Activated CD4-positive, alpha-beta memory T cell treated with anti-CD3 and anti-CD28 coated beads for 36 hours (primary cell): ENCODE measurements at regions of chr1 and their contacts with region 1.

Region 1: DNA sequence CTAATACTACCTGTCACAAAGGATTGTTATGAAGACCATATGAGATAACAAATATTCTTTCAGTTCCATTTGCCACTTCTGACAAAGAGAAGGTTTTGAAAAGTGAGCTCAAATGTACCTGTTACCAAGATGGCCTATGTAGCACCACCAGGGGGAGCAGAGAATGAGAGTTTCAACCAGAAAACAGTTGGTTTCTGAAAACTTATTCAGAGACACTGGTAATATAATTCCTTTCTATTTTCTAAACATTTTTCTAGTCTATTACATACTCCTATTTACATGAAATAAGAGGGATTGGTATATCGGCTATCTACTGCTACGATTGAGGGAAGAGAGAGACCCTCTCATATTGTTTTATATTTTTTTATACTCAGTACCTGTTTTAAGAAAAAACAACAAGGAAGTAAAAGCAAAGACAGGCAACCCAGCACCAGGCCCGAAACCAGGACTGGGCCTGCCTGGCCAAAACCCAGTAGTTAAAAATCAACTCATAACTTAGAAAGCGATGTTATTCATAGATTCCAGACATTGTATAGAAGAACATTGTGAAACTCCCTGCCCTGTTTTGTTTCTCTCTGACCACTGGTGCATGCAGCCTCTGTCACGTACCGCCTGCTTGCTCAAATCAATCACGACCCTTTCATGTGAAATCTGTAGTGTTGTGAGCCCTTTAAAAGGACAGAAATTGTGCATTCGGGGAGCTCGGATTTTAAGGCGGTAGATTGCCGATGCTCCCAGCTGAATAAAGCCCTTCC is 48.3 kb downstream of the IL23R start:
- DNase-seq: peak; percentile 62
- H3K4me3 Mint-ChIP-seq: no peak overlapping the region
- H3K27ac Mint-ChIP-seq: no peak overlapping the region
- H3K4me1 Mint-ChIP-seq: peaks cover 46% of the 10 kb centered on the region
- H3K27me3 Mint-ChIP-seq: no peaks in the 10 kb centered on the region

Region 2: GRCh38 chr1:66996018-66996682 is 218.4 kb before region 1 on chr1:
- CTCF ChIA-PET with region 1: interaction called, 47 read pairs
- POLR2A ChIA-PET with region 1: no interaction called
- intact Hi-C with region 1: loop called (anchors 1 kb)
- DNase-seq: peak; percentile 78
- H3K4me3 Mint-ChIP-seq: no peak overlapping the region
- H3K27ac Mint-ChIP-seq: peak overlapping the region; percentile 25
- H3K4me1 Mint-ChIP-seq: peaks cover 16% of the 10 kb centered on the region
- H3K27me3 Mint-ChIP-seq: no peaks in the 10 kb centered on the region

Region 3: GRCh38 chr1:67077593-67077992 is 137.0 kb before region 1 on chr1:
- CTCF ChIA-PET with region 1: no interaction called
- POLR2A ChIA-PET with region 1: no interaction called
- intact Hi-C with region 1: no loop called
- DNase-seq: no peak
- H3K4me3 Mint-ChIP-seq: no peak overlapping the region
- H3K27ac Mint-ChIP-seq: no peak overlapping the region
- H3K4me1 Mint-ChIP-seq: no peaks in the 10 kb centered on the region
- H3K27me3 Mint-ChIP-seq: peaks cover 3% of the 10 kb centered on the region

Region 4: DNA sequence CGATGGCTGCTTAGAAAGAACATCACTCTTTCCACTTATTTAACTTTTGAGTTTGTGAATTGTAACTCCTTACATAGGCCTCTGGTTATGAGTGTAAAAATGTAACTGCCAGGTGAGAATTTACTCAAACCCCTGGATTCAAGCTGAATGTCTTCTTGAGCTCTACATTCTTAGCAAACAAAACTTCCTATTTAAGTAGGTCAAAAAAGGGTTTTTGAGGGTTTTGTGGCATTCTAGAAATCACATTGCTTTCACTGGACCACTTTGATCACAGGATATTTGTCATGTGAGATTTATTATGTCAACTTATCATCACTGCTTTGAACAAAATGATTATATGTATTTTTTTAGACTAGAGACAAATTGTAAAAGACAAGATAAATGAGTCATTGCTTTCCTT is 42.6 kb before region 1 on chr1:
- CTCF ChIA-PET with region 1: interaction called, 59 read pairs
- POLR2A ChIA-PET with region 1: interaction called, 14 read pairs
- intact Hi-C with region 1: loop called (anchors 1 kb)
- DNase-seq: no peak
- H3K4me3 Mint-ChIP-seq: peak overlapping the region; percentile 74
- H3K27ac Mint-ChIP-seq: peak overlapping the region; percentile 99
- H3K4me1 Mint-ChIP-seq: peaks cover 72% of the 10 kb centered on the region
- H3K27me3 Mint-ChIP-seq: peaks cover 5% of the 10 kb centered on the region

Region 5: GRCh38 chr1:67274623-67275325 is 60.2 kb after region 1 on chr1:
- CTCF ChIA-PET with region 1: interaction called, 7 read pairs
- POLR2A ChIA-PET with region 1: no interaction called
- intact Hi-C with region 1: loop called (anchors 2 kb)
- DNase-seq: peak; percentile 27
- H3K4me3 Mint-ChIP-seq: no peak overlapping the region
- H3K27ac Mint-ChIP-seq: peak overlapping the region; percentile 75
- H3K4me1 Mint-ChIP-seq: peaks cover 51% of the 10 kb centered on the region
- H3K27me3 Mint-ChIP-seq: peaks cover 2% of the 10 kb centered on the region

Region 6: DNA sequence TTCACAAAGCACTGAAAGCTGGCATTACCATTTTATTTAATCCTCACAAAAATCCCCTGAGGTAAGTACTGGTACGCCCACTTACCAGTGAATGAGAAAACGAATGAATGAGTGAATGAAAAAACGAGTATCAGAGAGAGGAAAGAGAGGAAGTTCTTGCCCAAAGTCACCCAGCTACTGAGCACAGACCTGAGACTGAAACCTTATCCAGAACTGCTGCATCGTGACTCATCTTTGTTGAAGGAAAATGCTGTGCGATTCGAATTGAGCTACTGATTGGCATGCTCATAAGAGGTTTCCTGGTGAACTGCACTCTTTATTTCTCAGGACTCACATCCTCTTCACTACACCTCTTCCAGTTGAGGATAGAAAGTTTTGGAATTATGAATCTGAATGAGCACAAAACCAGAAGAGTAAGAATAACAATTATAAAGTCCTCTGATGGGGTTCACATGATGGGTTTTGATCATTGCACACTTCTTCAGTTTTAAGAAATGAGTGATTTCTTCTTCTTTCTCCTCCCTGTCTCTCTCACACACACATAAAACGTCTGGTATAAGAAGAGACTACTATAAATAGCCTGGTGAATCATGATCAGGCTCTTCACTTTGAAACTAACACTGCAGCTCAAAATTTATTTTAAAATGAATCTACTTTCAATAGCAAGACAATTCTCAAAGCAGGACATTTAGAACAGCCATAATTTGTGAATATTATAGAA is 125.2 kb after region 1 on chr1:
- CTCF ChIA-PET with region 1: interaction called, 14 read pairs
- POLR2A ChIA-PET with region 1: no interaction called
- intact Hi-C with region 1: no loop called
- DNase-seq: peak; percentile 66
- H3K4me3 Mint-ChIP-seq: peak overlapping the region; percentile 1
- H3K27ac Mint-ChIP-seq: peak overlapping the region; percentile 97
- H3K4me1 Mint-ChIP-seq: peaks cover 77% of the 10 kb centered on the region
- H3K27me3 Mint-ChIP-seq: no peaks in the 10 kb centered on the region

Region 7: GRCh38 chr1:67489643-67490042 is 275.0 kb after region 1 on chr1:
- CTCF ChIA-PET with region 1: interaction called, 15 read pairs
- POLR2A ChIA-PET with region 1: no interaction called
- intact Hi-C with region 1: no loop called
- DNase-seq: peak; percentile 12
- H3K4me3 Mint-ChIP-seq: no peak overlapping the region
- H3K27ac Mint-ChIP-seq: no peak overlapping the region
- H3K4me1 Mint-ChIP-seq: peaks cover under 1% of the 10 kb centered on the region
- H3K27me3 Mint-ChIP-seq: no peaks in the 10 kb centered on the region